Calu3 (cell line): ENCODE measurements at regions of chr1 and their contacts with region 1.

Region 1: DNA sequence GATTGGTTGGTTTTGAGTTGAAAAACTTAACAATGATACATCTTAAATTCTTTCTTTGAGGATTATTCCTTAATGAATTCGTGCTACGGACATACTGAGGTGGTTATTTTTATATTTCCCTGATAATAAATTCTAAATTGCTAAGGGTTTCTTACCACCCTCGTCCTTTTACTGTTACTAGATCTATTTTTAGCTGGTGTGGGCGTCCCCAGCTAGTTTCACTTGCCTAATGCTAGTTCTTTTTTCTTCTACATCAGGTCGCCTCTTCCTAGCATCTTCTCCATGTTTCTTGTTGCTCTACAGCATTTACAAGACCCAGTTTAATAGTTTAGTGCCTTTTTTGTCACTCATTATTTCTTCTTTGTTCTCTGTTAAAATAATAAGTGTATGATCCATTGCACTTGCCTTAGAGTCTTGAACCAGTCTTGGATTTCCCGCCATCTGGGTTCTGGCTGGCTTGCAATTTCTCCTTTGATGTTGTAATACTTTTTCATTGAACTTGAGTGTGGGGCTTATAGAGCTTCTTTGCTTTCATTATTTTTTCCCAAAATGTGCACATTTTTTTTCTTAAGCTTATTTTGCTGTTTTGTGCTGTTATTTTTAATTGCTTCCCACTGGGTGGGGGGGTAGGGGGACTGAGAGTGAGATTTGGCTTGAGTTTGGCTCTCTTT is 677 bp upstream of the HSD11B1 start:
- DNase-seq: no peak
- H3K4me3 Mint-ChIP-seq: no peak overlapping the region
- H3K27ac Mint-ChIP-seq: no peak overlapping the region
- H3K4me1 Mint-ChIP-seq: peaks cover 19% of the 10 kb centered on the region
- H3K27me3 Mint-ChIP-seq: no peaks in the 10 kb centered on the region
- CTCF ChIP-seq: no peak

Region 2: GRCh38 chr1:209375671-209376365 is 328.2 kb before region 1 on chr1:
- CTCF ChIA-PET with region 1: no interaction called
- intact Hi-C with region 1: no loop called
- DNase-seq: no peak
- H3K4me3 Mint-ChIP-seq: peak overlapping the region; percentile 35
- H3K27ac Mint-ChIP-seq: peak overlapping the region; percentile 74
- H3K4me1 Mint-ChIP-seq: peaks cover 34% of the 10 kb centered on the region
- H3K27me3 Mint-ChIP-seq: no peaks in the 10 kb centered on the region
- CTCF ChIP-seq: no peak

Region 3: DNA sequence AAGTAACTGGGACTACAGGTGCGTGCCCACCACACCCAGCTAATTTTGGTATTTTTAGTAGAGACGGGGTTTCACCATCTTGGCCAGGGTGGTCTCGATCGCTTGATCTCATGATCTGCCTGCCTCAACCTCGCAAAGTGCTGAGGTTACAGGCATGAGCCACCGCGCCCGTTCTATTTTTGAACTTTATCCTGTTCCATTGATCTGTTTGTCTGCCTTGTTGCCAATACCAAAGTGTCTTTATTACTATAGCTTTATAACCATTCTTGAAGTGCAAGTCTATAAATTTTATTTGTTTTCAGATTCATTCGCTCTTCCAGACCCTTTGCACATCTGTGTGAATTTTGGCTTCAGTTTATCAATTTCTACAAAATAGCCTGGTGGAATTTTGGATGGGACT is 262.0 kb after region 1 on chr1:
- CTCF ChIA-PET with region 1: no interaction called
- intact Hi-C with region 1: no loop called
- DNase-seq: no peak
- H3K4me3 Mint-ChIP-seq: no peak overlapping the region
- H3K27ac Mint-ChIP-seq: no peak overlapping the region
- H3K4me1 Mint-ChIP-seq: no peaks in the 10 kb centered on the region
- H3K27me3 Mint-ChIP-seq: no peaks in the 10 kb centered on the region
- CTCF ChIP-seq: no peak

Region 4: DNA sequence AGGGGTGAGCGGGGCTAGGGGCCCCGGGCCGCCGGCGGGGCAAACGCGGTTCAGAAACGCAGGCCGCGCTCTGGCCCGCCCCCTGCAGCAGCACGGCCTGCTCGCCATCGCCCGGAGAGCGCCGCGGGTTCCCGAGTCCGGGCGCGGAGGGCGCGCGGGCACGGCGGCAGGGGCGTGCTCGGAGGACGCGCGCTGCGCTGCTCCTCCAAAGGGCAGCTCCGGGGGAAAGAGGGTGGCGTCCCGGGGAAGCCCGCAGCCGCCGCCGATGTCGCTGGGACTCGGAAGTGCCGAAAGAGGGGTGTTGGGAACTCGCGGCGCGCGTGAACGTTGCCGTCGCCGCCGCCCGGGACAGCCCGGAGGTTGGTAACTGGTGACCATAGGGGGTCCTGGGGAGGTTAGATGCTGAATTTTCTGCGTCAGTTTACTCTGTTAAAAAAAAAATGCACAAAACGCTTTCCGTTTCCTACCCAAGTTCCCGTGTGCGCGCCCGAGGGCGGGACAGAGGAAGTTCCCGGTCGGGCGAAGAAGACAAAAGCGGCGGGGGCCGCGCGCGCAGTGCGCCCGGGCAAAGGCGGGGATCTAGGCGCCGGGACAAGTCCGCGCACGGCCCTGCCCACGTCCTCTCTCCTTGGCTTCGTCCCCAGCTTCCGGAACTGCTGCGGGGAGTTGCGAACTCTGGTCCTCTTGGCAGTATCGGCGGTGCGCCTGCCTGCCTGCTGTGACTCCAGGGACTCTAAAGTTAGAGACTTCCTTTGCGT is 625.0 kb after region 1 on chr1 and contains the start of gene HHAT:
- CTCF ChIA-PET with region 1: interaction called, 11 read pairs
- intact Hi-C with region 1: no loop called
- DNase-seq: peak; percentile 84
- H3K4me3 Mint-ChIP-seq: peak within 1 kb of the TSS; percentile 88
- H3K27ac Mint-ChIP-seq: peak within 1 kb of the TSS; percentile 69
- H3K4me1 Mint-ChIP-seq: peaks cover 10% of the 10 kb centered on the region
- H3K27me3 Mint-ChIP-seq: no peaks in the 10 kb centered on the region
- CTCF ChIP-seq: no peak
- total RNA-seq, gene HHAT: 5.5 and 5.8 TPM in 2 replicates